ENCODE measurements at regions of chr5 and their contacts with region 1.

Region 1: GRCh38 chr5:153974131-153974812 is 64.4 kb downstream of the FAM114A2 start:
- DNase-seq: peak; percentile 83
- H3K4me3 Mint-ChIP-seq: no peak overlapping the region
- H3K27ac Mint-ChIP-seq: no peak overlapping the region
- H3K4me1 Mint-ChIP-seq: no peaks in the 10 kb centered on the region
- H3K27me3 Mint-ChIP-seq: peaks cover 20% of the 10 kb centered on the region

Region 2: DNA sequence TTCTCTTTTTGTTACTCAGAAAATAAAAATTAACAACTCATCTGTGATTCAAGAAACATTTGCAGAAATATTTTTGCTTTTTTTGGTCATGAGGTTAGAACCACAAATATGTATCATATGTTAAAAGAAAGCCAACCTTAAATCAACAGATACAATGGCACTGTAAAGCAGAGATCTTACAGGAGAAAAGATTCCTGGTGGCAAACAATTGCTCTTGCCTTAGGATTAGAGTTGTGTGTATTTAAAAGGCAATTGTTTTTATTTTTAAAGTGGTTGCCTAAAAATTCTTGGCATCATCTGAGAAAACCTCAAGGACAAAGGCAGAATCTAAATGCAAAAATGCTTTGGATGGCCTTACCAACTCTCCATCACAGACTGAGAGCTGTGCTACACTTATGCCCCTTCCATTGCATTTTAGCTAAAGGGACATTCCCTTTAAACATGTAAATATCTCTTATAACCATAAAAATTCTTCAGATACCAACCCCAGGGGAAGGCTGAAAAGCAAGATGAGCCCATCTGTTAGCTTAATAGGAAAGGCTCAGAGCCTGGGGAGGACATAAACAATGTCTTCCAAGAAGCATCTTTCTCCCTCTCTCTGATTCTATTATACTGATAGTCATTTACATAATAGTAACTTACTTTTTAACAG is 36.0 kb before region 1 on chr5:
- intact Hi-C with region 1: no loop called
- DNase-seq: no peak
- H3K4me3 Mint-ChIP-seq: no peak overlapping the region
- H3K27ac Mint-ChIP-seq: no peak overlapping the region
- H3K4me1 Mint-ChIP-seq: no peaks in the 10 kb centered on the region
- H3K27me3 Mint-ChIP-seq: no peaks in the 10 kb centered on the region

Region 3: GRCh38 chr5:154179846-154180710 is 205.8 kb after region 1 on chr5:
- intact Hi-C with region 1: loop called (anchors 1 kb)
- DNase-seq: peak; percentile 83
- H3K4me3 Mint-ChIP-seq: no peak overlapping the region
- H3K27ac Mint-ChIP-seq: no peak overlapping the region
- H3K4me1 Mint-ChIP-seq: peaks cover 18% of the 10 kb centered on the region
- H3K27me3 Mint-ChIP-seq: peaks cover 10% of the 10 kb centered on the region

Region 4: GRCh38 chr5:154405078-154405792 is 431.0 kb after region 1 on chr5:
- intact Hi-C with region 1: loop called (anchors 1 kb)
- DNase-seq: peak; percentile 91
- H3K4me3 Mint-ChIP-seq: peak overlapping the region; percentile 63
- H3K27ac Mint-ChIP-seq: peak overlapping the region; percentile 59
- H3K4me1 Mint-ChIP-seq: peaks cover 7% of the 10 kb centered on the region
- H3K27me3 Mint-ChIP-seq: no peaks in the 10 kb centered on the region

Region 5: GRCh38 chr5:154467655-154468354 is 493.5 kb after region 1 on chr5:
- intact Hi-C with region 1: loop called (anchors 5 kb)
- DNase-seq: peak; percentile 92
- H3K4me3 Mint-ChIP-seq: no peak overlapping the region
- H3K27ac Mint-ChIP-seq: no peak overlapping the region
- H3K4me1 Mint-ChIP-seq: no peaks in the 10 kb centered on the region
- H3K27me3 Mint-ChIP-seq: peaks cover 58% of the 10 kb centered on the region

Region 6: GRCh38 chr5:154610321-154611154 is 636.3 kb after region 1 on chr5:
- intact Hi-C with region 1: loop called (anchors 5 kb)
- DNase-seq: peak; percentile 89
- H3K4me3 Mint-ChIP-seq: peak overlapping the region; percentile 32
- H3K27ac Mint-ChIP-seq: no peak overlapping the region
- H3K4me1 Mint-ChIP-seq: peaks cover 3% of the 10 kb centered on the region
- H3K27me3 Mint-ChIP-seq: peaks cover 49% of the 10 kb centered on the region

Region 7: GRCh38 chr5:154840435-154841272 is 866.4 kb after region 1 on chr5:
- intact Hi-C with region 1: no loop called
- DNase-seq: no peak
- H3K4me3 Mint-ChIP-seq: no peak overlapping the region
- H3K27ac Mint-ChIP-seq: no peak overlapping the region
- H3K4me1 Mint-ChIP-seq: peaks cover 2% of the 10 kb centered on the region
- H3K27me3 Mint-ChIP-seq: no peaks in the 10 kb centered on the region

Measured in activated CD4-positive, alpha-beta T cell treated with anti-CD3 and anti-CD28 coated beads, Interleukin-2, amount 10 ng/mL, durations not matched to agents 24 days and 14 days (primary cell).